ENCODE measurements at regions of chr21 and their contacts with region 1.

Region 1: GRCh38 chr21:25801217-25802014 is 66.6 kb downstream of the GABPA start:
- DNase-seq: peak; percentile 82
- H3K4me3 ChIP-seq: no peak overlapping the region
- H3K27ac ChIP-seq: no peak overlapping the region
- H3K4me1 ChIP-seq: no peaks in the 10 kb centered on the region
- H3K27me3 ChIP-seq: peaks cover 6 to 17% of the 10 kb centered on the region in 2 experiments
- CTCF ChIP-seq: peak; percentile 99 to 100
- POLR2A ChIP-seq: no peak

Region 2: GRCh38 chr21:25734904-25735645 is 66.3 kb before region 1 on chr21 and contains the starts of genes ATP5PF and GABPA:
- CTCF ChIA-PET with region 1: interaction called, 9 read pairs
- POLR2A ChIA-PET with region 1: no interaction called
- dilution Hi-C with region 1: no loop called
- intact Hi-C with region 1: loop called (anchors 1 kb)
- DNase-seq: peak; percentile 98
- H3K4me3 ChIP-seq: peak within 1 kb of the TSS; percentile 93 to 99 (median 98)
- H3K27ac ChIP-seq: peak within 1 kb of the TSS; percentile 99
- H3K4me1 ChIP-seq: peaks cover 17% of the 10 kb centered on the region
- H3K27me3 ChIP-seq: no peaks in the 10 kb centered on the region
- CTCF ChIP-seq: no peak
- POLR2A ChIP-seq: peak; percentile 85
- total RNA-seq, gene ATP5PF: 132 and 141 TPM in 2 replicates
- total RNA-seq, gene GABPA: 21.0 and 24.1 TPM in 2 replicates

Region 3: DNA sequence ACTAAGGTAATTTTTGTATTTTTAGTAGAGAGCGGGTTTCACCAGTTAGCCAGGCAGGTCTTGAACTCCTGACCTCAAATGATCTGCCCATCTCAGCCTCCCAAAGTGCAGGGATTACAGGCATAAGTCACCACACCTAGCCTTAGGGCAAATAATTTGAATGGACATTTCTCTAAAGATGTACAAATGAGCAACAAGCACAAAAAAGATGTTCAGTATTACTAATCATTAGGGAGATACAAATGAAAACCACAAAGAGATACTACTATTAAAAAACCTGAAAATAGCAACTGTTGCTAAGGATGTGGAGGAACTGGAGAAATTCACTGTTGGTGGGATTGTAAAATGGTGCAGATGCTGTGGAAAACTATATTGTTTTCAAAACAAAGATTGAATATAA is 12.5 kb after region 1 on chr21:
- CTCF ChIA-PET with region 1: interaction called, 13 read pairs
- POLR2A ChIA-PET with region 1: no interaction called
- dilution Hi-C with region 1: no loop called
- intact Hi-C with region 1: no loop called
- DNase-seq: no peak
- H3K4me3 ChIP-seq: no peak overlapping the region
- H3K27ac ChIP-seq: no peak overlapping the region
- H3K4me1 ChIP-seq: no peaks in the 10 kb centered on the region
- H3K27me3 ChIP-seq: peaks cover 0 to 2% of the 10 kb centered on the region in 2 experiments
- CTCF ChIP-seq: no peak
- POLR2A ChIP-seq: no peak

Region 4: DNA sequence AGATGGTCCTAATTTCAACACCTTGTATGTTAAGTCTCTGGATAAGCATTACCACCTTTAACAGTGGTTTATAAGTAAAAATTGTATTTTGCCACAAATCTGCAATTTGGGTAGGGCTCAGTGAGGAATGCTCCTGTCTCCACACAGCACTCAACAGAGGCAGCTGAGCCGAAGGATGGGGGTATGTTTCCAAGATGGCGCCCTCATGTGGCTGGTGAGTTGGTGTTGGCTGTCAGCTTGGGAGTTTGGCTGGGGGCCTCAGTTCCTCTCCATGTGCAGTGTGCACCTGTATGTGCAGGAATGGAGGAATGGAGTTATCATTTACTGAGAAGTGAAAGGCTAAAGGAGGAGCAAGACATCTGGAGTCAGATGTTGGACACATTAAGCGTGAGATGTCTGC is 70.2 kb after region 1 on chr21:
- CTCF ChIA-PET with region 1: no interaction called
- POLR2A ChIA-PET with region 1: no interaction called
- dilution Hi-C with region 1: no loop called
- intact Hi-C with region 1: no loop called
- DNase-seq: no peak
- H3K4me3 ChIP-seq: no peak overlapping the region
- H3K27ac ChIP-seq: no peak overlapping the region
- H3K4me1 ChIP-seq: no peaks in the 10 kb centered on the region
- H3K27me3 ChIP-seq: no peaks in the 10 kb centered on the region
- CTCF ChIP-seq: peak in 1 of 2 donors; percentile 17
- POLR2A ChIP-seq: no peak